ENCODE measurements at regions of chr16 and their contacts with region 1.

Region 1: DNA sequence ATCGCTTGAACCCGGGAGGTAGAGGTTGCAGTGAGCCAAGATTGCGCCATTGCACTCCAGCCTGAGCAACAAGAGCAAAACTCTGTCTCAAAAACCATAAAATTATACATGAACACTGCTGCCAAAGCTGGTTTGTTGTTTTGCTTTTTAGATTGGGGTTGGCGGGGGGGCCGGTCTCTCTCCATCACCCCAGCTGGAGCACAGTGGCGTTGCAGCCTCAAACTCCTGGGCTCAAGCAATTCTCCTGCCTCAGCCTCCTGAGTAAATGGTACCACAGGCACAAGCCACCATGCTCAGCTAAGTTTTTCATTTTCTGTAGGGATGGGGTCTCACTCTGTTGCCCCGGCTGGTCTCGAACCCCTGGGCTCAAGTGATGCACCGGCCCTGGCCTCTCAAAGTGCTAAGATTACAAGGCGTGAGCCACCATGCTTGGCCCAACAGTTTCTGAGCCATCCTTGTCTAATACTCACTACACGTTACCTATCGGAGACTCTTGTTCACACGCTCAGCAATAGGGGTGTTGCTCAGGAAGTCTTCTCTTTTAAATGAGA is 11.7 kb downstream of the WDR59 start:
- DNase-seq: no peak
- ATAC-seq: no peak
- H3K4me3 ChIP-seq: no peak overlapping the region
- H3K27ac ChIP-seq: no peak overlapping the region
- H3K4me1 ChIP-seq: peaks cover 15% of the 10 kb centered on the region
- H3K27me3 ChIP-seq: no peaks in the 10 kb centered on the region
- CTCF ChIP-seq: no peak
- EP300 ChIP-seq: no peak
- POLR2A ChIP-seq: no peak
- RAD21 ChIP-seq: no peak

Region 2: GRCh38 chr16:74922150-74923138 is 50.8 kb before region 1 on chr16:
- CTCF ChIA-PET with region 1: no interaction called
- POLR2A ChIA-PET with region 1: no interaction called
- RAD21 ChIA-PET with region 1: no interaction called
- SMC1A ChIA-PET with region 1: no interaction called
- in situ Hi-C with region 1: no loop called
- intact Hi-C with region 1: no loop called
- DNase-seq: no peak
- ATAC-seq: no peak
- H3K4me3 ChIP-seq: no peak overlapping the region
- H3K27ac ChIP-seq: no peak overlapping the region
- H3K4me1 ChIP-seq: no peaks in the 10 kb centered on the region
- H3K27me3 ChIP-seq: no peaks in the 10 kb centered on the region
- CTCF ChIP-seq: no peak
- EP300 ChIP-seq: no peak
- POLR2A ChIP-seq: no peak
- RAD21 ChIP-seq: no peak

Region 3: DNA sequence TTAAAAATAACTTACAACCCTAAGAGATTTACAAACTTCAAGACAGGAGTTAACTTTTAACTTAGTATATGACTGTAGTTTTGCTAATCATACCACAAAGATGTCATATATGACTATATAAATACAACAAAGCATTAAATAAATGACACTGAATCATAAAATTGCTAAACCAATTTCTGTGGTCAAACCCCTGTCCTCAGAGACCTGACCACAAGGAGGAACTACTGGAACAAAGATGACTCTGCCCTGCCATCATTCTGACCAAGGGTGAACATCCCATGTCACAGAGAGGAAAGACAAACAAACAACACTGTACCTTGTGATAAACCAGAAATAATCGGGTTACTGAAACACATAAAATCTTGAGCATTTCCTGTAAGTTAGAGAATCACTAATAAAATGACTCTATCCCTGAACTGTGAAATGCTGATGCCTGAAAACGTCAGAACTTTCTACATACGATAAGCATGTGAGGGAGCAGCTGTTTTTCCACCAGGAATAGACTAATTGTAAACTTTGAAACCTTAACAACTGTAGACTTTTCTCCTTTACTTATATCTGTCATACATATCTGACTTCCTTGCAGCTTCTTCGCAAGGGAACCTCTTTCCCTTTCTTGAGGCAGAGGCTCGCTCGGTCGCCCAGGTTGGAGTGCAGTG is 36.2 kb before region 1 on chr16:
- CTCF ChIA-PET with region 1: no interaction called
- POLR2A ChIA-PET with region 1: no interaction called
- RAD21 ChIA-PET with region 1: no interaction called
- SMC1A ChIA-PET with region 1: interaction called, 3 read pairs
- in situ Hi-C with region 1: no loop called
- intact Hi-C with region 1: loop called (anchors 2 kb)
- DNase-seq: peak; percentile 50
- ATAC-seq: peak; percentile 99
- H3K4me3 ChIP-seq: no peak overlapping the region
- H3K27ac ChIP-seq: no peak overlapping the region; the same call in 1 of the 2 replicates
- H3K4me1 ChIP-seq: 0 out of 2 replicates have a peak, but pooled peaks cover 4% of the 10 kb centered on the region
- H3K27me3 ChIP-seq: no peaks in the 10 kb centered on the region
- CTCF ChIP-seq: no peak; a peak in 1 of 6 replicates
- EP300 ChIP-seq: peak; percentile 84 to 91
- POLR2A ChIP-seq: no peak
- RAD21 ChIP-seq: peak; percentile 33; the same call in 1 of the 2 replicates